K562 (cell line): ENCODE measurements at regions of chr1 and their contacts with region 1.

Region 1: DNA sequence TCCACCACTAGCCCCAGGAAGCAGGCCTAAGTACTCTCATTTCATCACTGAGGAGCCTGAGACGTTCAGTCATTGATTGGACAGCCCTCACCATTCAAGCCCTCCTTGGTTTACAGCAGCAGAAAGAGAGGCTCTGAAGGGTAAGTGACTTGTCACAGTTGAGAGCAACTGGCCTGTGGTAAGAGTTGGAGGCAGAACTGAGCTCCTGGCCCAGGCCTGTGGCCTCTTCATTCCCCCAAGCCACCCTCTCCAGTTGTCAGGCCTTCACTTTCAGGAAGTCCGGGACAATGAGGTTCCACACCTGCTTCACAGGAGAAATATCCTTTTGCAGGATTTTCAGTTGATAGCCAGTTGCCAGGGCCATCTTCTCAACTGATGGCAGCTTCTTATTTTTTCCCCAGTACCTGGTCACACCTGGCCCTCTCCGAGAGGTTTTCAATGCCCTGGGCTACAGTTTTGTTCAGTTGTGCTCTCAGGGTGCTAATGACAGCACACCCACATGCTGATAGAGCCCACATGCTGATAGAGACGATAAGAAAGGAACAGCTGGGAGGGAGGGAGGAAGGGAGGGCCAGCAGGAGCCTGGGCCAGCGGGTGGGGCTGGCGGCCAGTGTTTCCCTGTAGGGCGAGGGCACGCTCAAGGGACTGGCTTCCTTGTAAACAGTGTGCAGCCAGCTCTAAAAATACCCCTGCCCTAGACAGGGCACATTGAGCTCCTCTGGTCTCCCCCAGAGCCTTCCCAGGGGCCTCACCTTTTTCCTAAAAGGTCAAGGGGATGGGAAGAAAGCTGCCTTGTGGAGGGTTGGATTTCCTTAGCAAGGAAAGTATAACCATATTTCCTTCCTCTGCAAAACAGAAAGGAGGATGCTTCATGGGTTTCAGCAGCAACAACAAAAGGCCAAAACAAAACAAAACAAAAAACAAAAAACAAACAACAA is 112.7 kb upstream of the JUN start:
- DNase-seq: peak; percentile 75 to 83 (median 80)
- ATAC-seq: peak; percentile 54
- H3K4me3 ChIP-seq: no peak overlapping the region
- H3K27ac ChIP-seq: peak overlapping the region; percentile 56
- H3K4me1 ChIP-seq: peaks cover 54 to 83% of the 10 kb centered on the region in 2 experiments
- H3K27me3 ChIP-seq: no peaks in the 10 kb centered on the region
- CTCF ChIP-seq: peak in 1 of 3 experiments; percentile 2; a peak in 1 of 6 replicates
- EP300 ChIP-seq: peak; percentile 73
- POLR2A ChIP-seq: no peak
- RAD21 ChIP-seq: peak; percentile 33 to 53

Region 2: GRCh38 chr1:58104960-58105359 is 791.6 kb before region 1 on chr1:
- CTCF ChIA-PET with region 1: no interaction called
- POLR2A ChIA-PET with region 1: no interaction called
- in situ Hi-C with region 1: no loop called
- intact Hi-C with region 1: no loop called
- DNase-seq: no peak
- ATAC-seq: no peak
- H3K4me3 ChIP-seq: no peak overlapping the region
- H3K27ac ChIP-seq: no peak overlapping the region
- H3K4me1 ChIP-seq: no peaks in the 10 kb centered on the region
- H3K27me3 ChIP-seq: no peaks in the 10 kb centered on the region
- CTCF ChIP-seq: no peak
- EP300 ChIP-seq: no peak
- POLR2A ChIP-seq: no peak
- RAD21 ChIP-seq: no peak

Region 3: GRCh38 chr1:58727363-58727762 is 169.2 kb before region 1 on chr1:
- CTCF ChIA-PET with region 1: no interaction called
- POLR2A ChIA-PET with region 1: no interaction called
- in situ Hi-C with region 1: no loop called
- intact Hi-C with region 1: no loop called
- DNase-seq: no peak
- ATAC-seq: no peak
- H3K4me3 ChIP-seq: no peak overlapping the region
- H3K27ac ChIP-seq: no peak overlapping the region
- H3K4me1 ChIP-seq: no peaks in the 10 kb centered on the region; a peak in 1 of 5 replicates
- H3K27me3 ChIP-seq: peaks cover 7 to 8% of the 10 kb centered on the region in 2 experiments; a peak in 3 of 5 replicates
- CTCF ChIP-seq: no peak
- EP300 ChIP-seq: no peak
- POLR2A ChIP-seq: no peak
- RAD21 ChIP-seq: no peak

Region 4: DNA sequence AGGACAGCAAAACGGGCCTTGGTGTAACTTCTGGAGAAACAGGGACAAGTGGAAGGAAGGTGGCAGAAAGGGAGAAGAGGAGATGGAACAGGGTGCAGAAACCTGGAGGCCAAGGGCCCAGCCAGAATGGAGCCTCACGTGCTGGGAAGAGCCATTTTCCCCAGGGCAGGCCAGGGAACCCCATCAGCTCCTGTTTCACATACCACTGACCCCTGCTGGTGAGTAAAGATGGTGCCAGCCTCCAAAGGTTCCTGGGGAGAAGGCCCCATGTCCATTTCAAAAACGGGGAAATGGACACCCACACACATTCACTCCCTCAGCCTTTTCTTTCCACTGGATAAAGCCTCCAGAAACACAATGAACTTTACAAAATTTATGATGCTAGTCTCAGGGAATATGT is 55.1 kb before region 1 on chr1:
- CTCF ChIA-PET with region 1: no interaction called
- POLR2A ChIA-PET with region 1: no interaction called
- in situ Hi-C with region 1: no loop called
- intact Hi-C with region 1: loop called (anchors 5 kb)
- DNase-seq: peak; percentile 59 to 76 (median 67)
- ATAC-seq: peak; percentile 96
- H3K4me3 ChIP-seq: no peak overlapping the region
- H3K27ac ChIP-seq: no peak overlapping the region
- H3K4me1 ChIP-seq: peaks cover 0 to 10% of the 10 kb centered on the region in 2 experiments; a peak in 2 of 5 replicates
- H3K27me3 ChIP-seq: no peaks in the 10 kb centered on the region
- CTCF ChIP-seq: peak; percentile 60 to 83 (median 72)
- EP300 ChIP-seq: no peak
- POLR2A ChIP-seq: no peak
- RAD21 ChIP-seq: peak; percentile 48 to 73; a peak in 3 of 4 replicates

Region 5: DNA sequence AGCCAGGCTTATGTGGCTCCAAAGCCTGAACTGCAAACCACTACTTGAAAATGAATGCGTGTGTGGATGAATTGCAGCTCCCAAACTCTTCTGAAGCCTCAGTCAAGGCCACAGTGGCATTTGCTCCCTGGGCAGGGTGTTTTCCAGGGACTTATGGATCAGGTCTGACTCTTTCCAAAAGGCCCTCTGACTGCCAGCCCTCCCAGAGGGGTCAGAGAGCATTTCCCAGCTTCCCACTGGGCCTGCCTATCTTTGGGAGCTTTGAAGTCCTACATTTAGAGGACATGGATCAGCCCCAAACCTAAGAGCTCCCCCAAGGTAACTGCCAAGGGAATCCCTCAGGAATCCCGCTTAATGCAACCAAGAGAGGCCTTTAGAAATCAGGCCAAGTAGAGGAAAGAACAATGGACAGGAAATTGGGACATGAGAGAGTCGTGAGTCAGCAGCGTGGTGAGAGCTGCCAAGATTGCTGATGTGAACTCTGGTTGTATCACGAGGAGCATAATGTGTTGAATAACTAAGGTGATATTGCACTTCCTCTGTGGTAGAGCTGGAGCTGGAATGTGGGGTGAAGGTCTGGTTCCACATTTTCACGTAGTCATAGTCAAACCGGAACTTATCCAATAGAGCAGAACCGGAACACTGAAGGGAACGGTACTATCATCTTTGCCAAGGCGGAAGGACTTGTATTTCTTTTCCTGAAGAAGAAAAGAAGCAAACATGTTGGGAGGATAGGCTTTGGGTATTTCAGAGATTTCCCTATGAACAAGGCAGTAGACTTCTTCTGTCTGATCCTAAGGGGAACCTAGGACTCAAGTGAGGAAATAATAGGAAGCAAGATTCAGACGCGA is 13.3 kb before region 1 on chr1:
- CTCF ChIA-PET with region 1: no interaction called
- POLR2A ChIA-PET with region 1: interaction called, 17 read pairs
- in situ Hi-C with region 1: no loop called
- intact Hi-C with region 1: loop called (anchors 1 kb)
- DNase-seq: peak; percentile 41 to 89 (median 62)
- ATAC-seq: peak; percentile 63
- H3K4me3 ChIP-seq: no peak overlapping the region
- H3K27ac ChIP-seq: peak overlapping the region; percentile 97
- H3K4me1 ChIP-seq: peaks cover 47 to 64% of the 10 kb centered on the region in 2 experiments
- H3K27me3 ChIP-seq: no peaks in the 10 kb centered on the region
- CTCF ChIP-seq: no peak
- EP300 ChIP-seq: peak; percentile 86
- POLR2A ChIP-seq: 0 out of 2 replicates have a peak, but pooled peaks have one; percentile 39
- RAD21 ChIP-seq: peak in 1 of 2 experiments; percentile 17; a peak in 1 of 4 replicates

Region 6: GRCh38 chr1:58908561-58909560 is 12.3 kb after region 1 on chr1:
- CTCF ChIA-PET with region 1: no interaction called
- POLR2A ChIA-PET with region 1: interaction called, 10 read pairs
- in situ Hi-C with region 1: no loop called
- intact Hi-C with region 1: no loop called
- DNase-seq: no peak
- ATAC-seq: no peak
- H3K4me3 ChIP-seq: no peak overlapping the region
- H3K27ac ChIP-seq: no peak overlapping the region
- H3K4me1 ChIP-seq: peaks cover 4 to 10% of the 10 kb centered on the region in 2 experiments
- H3K27me3 ChIP-seq: no peaks in the 10 kb centered on the region
- CTCF ChIP-seq: no peak
- EP300 ChIP-seq: no peak
- POLR2A ChIP-seq: no peak
- RAD21 ChIP-seq: no peak

Region 7: DNA sequence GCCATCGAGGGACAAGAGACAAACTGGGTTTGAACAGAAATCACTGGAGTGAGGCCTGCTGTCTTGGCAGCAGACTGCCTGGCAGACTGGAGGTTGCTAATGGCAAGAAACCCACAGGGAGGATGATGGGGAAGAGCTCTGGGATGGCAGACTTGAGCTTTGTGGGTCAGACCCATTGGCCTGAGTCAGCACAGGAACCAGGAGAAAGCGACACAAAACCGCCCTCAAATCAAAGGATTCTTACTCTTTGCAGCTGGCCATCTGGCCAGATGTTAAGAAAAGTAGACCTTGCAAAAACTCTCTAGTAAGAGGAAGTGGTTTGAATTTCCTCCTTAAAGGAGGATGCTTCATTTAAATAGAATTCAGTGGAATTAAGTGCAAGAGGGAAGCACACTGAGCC is 82.6 kb after region 1 on chr1:
- CTCF ChIA-PET with region 1: no interaction called
- POLR2A ChIA-PET with region 1: interaction called, 3 read pairs
- in situ Hi-C with region 1: no loop called
- intact Hi-C with region 1: loop called (anchors 5 kb)
- DNase-seq: no peak
- ATAC-seq: no peak
- H3K4me3 ChIP-seq: no peak overlapping the region
- H3K27ac ChIP-seq: no peak overlapping the region
- H3K4me1 ChIP-seq: peaks cover 4 to 28% of the 10 kb centered on the region in 2 experiments
- H3K27me3 ChIP-seq: no peaks in the 10 kb centered on the region
- CTCF ChIP-seq: no peak
- EP300 ChIP-seq: no peak
- POLR2A ChIP-seq: no peak
- RAD21 ChIP-seq: no peak

Region 8: DNA sequence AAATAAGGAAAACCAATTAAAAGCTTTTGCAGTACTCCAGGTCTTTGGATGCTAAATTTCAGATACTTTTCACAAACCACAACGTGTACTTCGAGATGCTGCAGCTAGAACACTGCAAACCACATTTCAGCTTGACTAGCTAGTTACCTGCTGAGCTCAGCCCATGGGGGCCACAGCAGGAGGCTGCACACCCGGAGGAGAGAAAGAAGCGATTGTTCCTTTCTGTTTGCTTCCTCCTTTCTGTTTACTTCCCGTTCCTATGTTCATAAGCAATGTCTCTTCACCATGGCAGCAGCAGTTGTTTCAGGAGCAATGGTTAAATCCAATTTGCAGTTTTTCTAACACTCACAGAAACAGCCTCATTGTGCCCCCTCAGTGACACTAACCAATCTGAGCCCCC is 174.8 kb after region 1 on chr1:
- CTCF ChIA-PET with region 1: no interaction called
- POLR2A ChIA-PET with region 1: no interaction called
- in situ Hi-C with region 1: no loop called
- intact Hi-C with region 1: no loop called
- DNase-seq: no peak
- ATAC-seq: no peak
- H3K4me3 ChIP-seq: no peak overlapping the region
- H3K27ac ChIP-seq: no peak overlapping the region
- H3K4me1 ChIP-seq: peaks cover 6 to 17% of the 10 kb centered on the region in 2 experiments; a peak in 4 of 5 replicates
- H3K27me3 ChIP-seq: no peaks in the 10 kb centered on the region
- CTCF ChIP-seq: no peak
- EP300 ChIP-seq: no peak
- POLR2A ChIP-seq: no peak
- RAD21 ChIP-seq: no peak